B cell (primary cell): ENCODE measurements at regions of chr4 and their contacts with region 1.

Region 1: DNA sequence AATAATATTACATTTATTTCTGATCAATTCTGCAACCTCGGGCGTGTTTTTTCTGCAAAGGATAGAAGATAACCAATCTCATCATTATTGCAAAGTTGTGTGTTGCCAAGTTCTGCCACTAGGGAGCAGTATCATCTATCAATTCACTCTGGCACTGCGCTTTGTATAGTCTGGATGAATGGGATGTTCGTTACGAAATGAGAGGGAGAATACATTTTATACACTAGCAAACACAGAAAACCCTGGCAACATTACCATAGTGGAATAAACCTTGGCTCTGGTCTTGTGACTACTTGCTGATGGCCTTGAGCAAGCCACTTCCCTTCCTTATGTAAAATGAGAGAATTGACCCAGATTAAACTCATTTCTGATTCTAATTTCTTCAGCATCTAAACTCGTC is 97.5 kb upstream of the ZNF518B start:
- DNase-seq: peak; percentile 67
- ATAC-seq: peak; percentile 70
- H3K4me3 ChIP-seq: no peak overlapping the region
- H3K4me3 Mint-ChIP-seq: no peak overlapping the region
- H3K27ac ChIP-seq: no peak overlapping the region
- H3K27ac Mint-ChIP-seq: no peak overlapping the region
- H3K4me1 ChIP-seq: peaks cover 4 to 9% of the 10 kb centered on the region in 2 donors
- H3K4me1 Mint-ChIP-seq: peaks cover 10% of the 10 kb centered on the region
- H3K27me3 ChIP-seq: no peaks in the 10 kb centered on the region
- H3K27me3 Mint-ChIP-seq: no peaks in the 10 kb centered on the region
- CTCF ChIP-seq: peak; percentile 93

Region 2: GRCh38 chr4:10157478-10158332 is 397.0 kb before region 1 on chr4:
- CTCF ChIA-PET with region 1: interaction called, 14 read pairs
- POLR2A ChIA-PET with region 1: no interaction called
- intact Hi-C with region 1: no loop called
- DNase-seq: peak; percentile 59
- ATAC-seq: peak; percentile 76
- H3K4me3 ChIP-seq: no peak overlapping the region
- H3K4me3 Mint-ChIP-seq: no peak overlapping the region
- H3K27ac ChIP-seq: no peak overlapping the region
- H3K27ac Mint-ChIP-seq: no peak overlapping the region
- H3K4me1 ChIP-seq: no peaks in the 10 kb centered on the region
- H3K4me1 Mint-ChIP-seq: peaks cover 5% of the 10 kb centered on the region
- H3K27me3 ChIP-seq: peaks cover 0 to 13% (median 10%) of the 10 kb centered on the region in 4 experiments
- H3K27me3 Mint-ChIP-seq: peaks cover 43% of the 10 kb centered on the region
- CTCF ChIP-seq: peak; percentile 78

Region 3: GRCh38 chr4:10366628-10367027 is 188.1 kb before region 1 on chr4:
- CTCF ChIA-PET with region 1: no interaction called
- POLR2A ChIA-PET with region 1: no interaction called
- intact Hi-C with region 1: no loop called
- DNase-seq: no peak
- ATAC-seq: no peak
- H3K4me3 ChIP-seq: no peak overlapping the region
- H3K4me3 Mint-ChIP-seq: no peak overlapping the region
- H3K27ac ChIP-seq: no peak overlapping the region
- H3K27ac Mint-ChIP-seq: no peak overlapping the region
- H3K4me1 ChIP-seq: no peaks in the 10 kb centered on the region
- H3K4me1 Mint-ChIP-seq: no peaks in the 10 kb centered on the region
- H3K27me3 ChIP-seq: peaks cover 0 to 5% (median 1%) of the 10 kb centered on the region in 4 experiments
- H3K27me3 Mint-ChIP-seq: peaks cover 13% of the 10 kb centered on the region
- CTCF ChIP-seq: no peak

Region 4: DNA sequence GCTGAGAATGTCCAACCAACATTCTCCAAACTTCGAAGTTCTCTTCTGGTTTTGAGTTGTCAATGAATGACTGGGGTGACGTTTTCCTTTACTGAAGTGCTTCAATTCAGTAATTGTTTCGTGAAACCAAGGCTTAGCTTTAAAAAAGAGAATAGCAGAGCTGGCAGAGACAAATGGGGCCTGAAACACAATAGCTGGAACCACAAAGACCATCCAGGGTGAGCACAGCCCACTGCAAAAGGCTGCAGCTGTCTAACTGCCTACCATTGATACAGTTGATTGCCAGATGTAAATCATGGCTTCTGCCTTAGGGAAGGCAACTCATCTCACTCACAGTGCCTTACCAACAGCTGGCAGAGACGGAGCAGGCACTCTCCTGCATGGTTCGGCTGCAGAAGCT is 18.8 kb before region 1 on chr4:
- CTCF ChIA-PET with region 1: interaction called, 13 read pairs
- POLR2A ChIA-PET with region 1: no interaction called
- intact Hi-C with region 1: no loop called
- DNase-seq: no peak
- ATAC-seq: no peak
- H3K4me3 ChIP-seq: no peak overlapping the region
- H3K4me3 Mint-ChIP-seq: no peak overlapping the region
- H3K27ac ChIP-seq: no peak overlapping the region
- H3K27ac Mint-ChIP-seq: no peak overlapping the region
- H3K4me1 ChIP-seq: no peaks in the 10 kb centered on the region
- H3K4me1 Mint-ChIP-seq: peaks cover 5% of the 10 kb centered on the region
- H3K27me3 ChIP-seq: no peaks in the 10 kb centered on the region
- H3K27me3 Mint-ChIP-seq: peaks cover 6% of the 10 kb centered on the region
- CTCF ChIP-seq: no peak

Region 5: GRCh38 chr4:11428899-11429698 is 874.4 kb after region 1 on chr4:
- CTCF ChIA-PET with region 1: interaction called, 22 read pairs
- POLR2A ChIA-PET with region 1: no interaction called
- intact Hi-C with region 1: loop called (anchors 1 kb)
- DNase-seq: peak; percentile 85
- ATAC-seq: peak; percentile 90
- H3K4me3 ChIP-seq: peak overlapping the region; percentile 70 to 96 (median 79)
- H3K4me3 Mint-ChIP-seq: peak overlapping the region; percentile 88
- H3K27ac ChIP-seq: peak overlapping the region; percentile 46 to 64
- H3K27ac Mint-ChIP-seq: peak overlapping the region; percentile 92
- H3K4me1 ChIP-seq: peaks cover 42 to 50% of the 10 kb centered on the region in 2 donors
- H3K4me1 Mint-ChIP-seq: peaks cover 68% of the 10 kb centered on the region
- H3K27me3 ChIP-seq: no peaks in the 10 kb centered on the region
- H3K27me3 Mint-ChIP-seq: no peaks in the 10 kb centered on the region
- CTCF ChIP-seq: peak; percentile 72

Region 6: DNA sequence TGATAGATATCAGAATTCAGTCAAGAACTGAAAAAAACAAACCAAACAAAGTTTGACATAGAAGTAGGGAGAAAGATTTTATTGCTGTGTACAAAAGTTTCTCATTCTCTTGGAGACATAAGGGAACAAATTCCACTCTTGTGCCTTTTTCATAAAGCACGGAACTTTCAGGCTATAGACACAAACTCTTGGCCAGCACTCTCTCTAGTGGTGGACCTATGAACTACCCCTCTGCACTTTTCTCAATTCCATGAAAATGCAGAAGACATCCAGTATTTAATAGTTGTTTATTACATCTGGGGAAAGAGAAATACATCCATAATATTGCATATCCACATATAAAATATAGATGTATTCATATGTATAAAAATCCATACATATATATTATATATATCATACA is 1165.6 kb after region 1 on chr4:
- CTCF ChIA-PET with region 1: interaction called, 12 read pairs
- POLR2A ChIA-PET with region 1: no interaction called
- intact Hi-C with region 1: loop called (anchors 1 kb)
- DNase-seq: peak; percentile 34
- ATAC-seq: no peak
- H3K4me3 ChIP-seq: no peak overlapping the region
- H3K4me3 Mint-ChIP-seq: no peak overlapping the region
- H3K27ac ChIP-seq: no peak overlapping the region
- H3K27ac Mint-ChIP-seq: no peak overlapping the region
- H3K4me1 ChIP-seq: no peaks in the 10 kb centered on the region
- H3K4me1 Mint-ChIP-seq: no peaks in the 10 kb centered on the region
- H3K27me3 ChIP-seq: no peaks in the 10 kb centered on the region
- H3K27me3 Mint-ChIP-seq: peaks cover 10% of the 10 kb centered on the region
- CTCF ChIP-seq: peak; percentile 65

Region 7: DNA sequence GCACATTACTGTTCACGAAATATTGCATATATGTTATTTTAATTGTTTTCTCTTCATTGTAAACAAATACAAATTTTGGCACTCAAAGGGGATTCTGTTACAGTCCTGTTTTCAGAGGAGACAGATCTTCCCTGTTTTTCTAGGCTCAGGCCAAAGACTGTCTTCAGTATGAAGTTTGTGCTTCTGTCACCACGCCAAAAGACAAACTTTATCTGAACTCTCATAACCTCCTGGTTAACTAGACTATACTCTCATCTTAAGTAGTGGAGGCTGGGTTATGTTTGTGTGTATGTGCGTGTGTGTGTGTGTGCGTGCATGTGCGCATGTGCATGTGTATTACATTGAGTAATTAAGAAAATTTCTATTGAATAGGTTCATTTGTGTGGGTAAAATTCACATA is 1550.8 kb after region 1 on chr4:
- CTCF ChIA-PET with region 1: no interaction called
- POLR2A ChIA-PET with region 1: no interaction called
- intact Hi-C with region 1: no loop called
- DNase-seq: no peak
- ATAC-seq: no peak
- H3K4me3 ChIP-seq: no peak overlapping the region
- H3K4me3 Mint-ChIP-seq: no peak overlapping the region
- H3K27ac ChIP-seq: no peak overlapping the region
- H3K27ac Mint-ChIP-seq: no peak overlapping the region
- H3K4me1 ChIP-seq: no peaks in the 10 kb centered on the region
- H3K4me1 Mint-ChIP-seq: no peaks in the 10 kb centered on the region
- H3K27me3 ChIP-seq: no peaks in the 10 kb centered on the region
- H3K27me3 Mint-ChIP-seq: no peaks in the 10 kb centered on the region
- CTCF ChIP-seq: no peak